ENCODE measurements at regions of chr1 and their contacts with region 1.

Region 1: DNA sequence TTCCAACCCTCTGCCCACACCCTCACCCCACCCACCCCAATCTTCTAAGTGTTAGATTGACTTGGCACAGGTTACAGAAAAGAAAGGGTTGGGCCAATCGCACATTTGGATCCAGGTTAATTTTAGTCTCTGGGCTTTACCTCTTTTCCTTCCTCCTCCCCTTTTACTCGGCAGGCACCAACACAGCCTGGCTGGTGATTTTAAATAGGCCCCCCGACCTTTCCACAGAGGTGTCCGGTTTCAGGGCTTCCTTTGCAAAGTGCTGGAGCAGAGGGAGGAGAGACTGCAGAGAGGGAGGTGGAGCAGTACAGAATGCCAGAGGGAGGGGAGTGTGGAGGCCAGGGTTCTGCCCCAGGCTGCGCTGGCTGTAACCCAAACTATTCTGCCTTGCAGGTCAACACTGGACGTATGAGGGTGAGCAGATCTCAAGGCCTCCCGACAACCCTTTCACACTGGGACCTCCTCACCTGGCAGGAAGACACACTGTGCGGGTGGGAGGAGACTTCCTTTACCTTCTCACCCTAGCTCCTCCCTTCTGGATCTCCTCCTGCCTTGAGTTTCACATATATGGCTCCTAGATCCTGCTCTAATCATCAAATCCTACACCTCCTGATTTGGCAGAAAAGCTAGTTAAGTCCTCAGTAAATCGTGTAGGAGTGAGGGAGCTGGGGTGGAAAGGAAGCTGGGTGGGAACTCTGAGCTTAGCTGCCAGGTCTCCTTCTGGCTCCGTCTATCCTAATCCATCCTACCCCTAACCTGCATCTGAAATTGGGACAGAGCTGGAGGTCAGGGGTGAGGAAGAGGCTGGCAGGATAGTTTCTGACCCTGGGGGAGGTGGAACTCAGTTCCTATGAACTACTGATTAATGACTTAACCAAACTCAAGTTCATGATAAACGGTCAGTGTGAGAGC is 2.4 kb downstream of the CA14 start:
- DNase-seq: peak; percentile 63
- H3K4me3 Mint-ChIP-seq: peak overlapping the region; percentile 49
- H3K27ac Mint-ChIP-seq: peak overlapping the region; percentile 77
- H3K4me1 Mint-ChIP-seq: peaks cover 78% of the 10 kb centered on the region
- H3K27me3 Mint-ChIP-seq: peaks cover 28% of the 10 kb centered on the region
- CTCF ChIP-seq: no peak

Region 2: GRCh38 chr1:150186789-150187559 is 73.0 kb before region 1 on chr1:
- CTCF ChIA-PET with region 1: no interaction called
- intact Hi-C with region 1: no loop called
- DNase-seq: peak; percentile 34
- H3K4me3 Mint-ChIP-seq: no peak overlapping the region
- H3K27ac Mint-ChIP-seq: peak overlapping the region; percentile 67
- H3K4me1 Mint-ChIP-seq: peaks cover 25% of the 10 kb centered on the region
- H3K27me3 Mint-ChIP-seq: no peaks in the 10 kb centered on the region
- CTCF ChIP-seq: peak; percentile 55

Region 3: DNA sequence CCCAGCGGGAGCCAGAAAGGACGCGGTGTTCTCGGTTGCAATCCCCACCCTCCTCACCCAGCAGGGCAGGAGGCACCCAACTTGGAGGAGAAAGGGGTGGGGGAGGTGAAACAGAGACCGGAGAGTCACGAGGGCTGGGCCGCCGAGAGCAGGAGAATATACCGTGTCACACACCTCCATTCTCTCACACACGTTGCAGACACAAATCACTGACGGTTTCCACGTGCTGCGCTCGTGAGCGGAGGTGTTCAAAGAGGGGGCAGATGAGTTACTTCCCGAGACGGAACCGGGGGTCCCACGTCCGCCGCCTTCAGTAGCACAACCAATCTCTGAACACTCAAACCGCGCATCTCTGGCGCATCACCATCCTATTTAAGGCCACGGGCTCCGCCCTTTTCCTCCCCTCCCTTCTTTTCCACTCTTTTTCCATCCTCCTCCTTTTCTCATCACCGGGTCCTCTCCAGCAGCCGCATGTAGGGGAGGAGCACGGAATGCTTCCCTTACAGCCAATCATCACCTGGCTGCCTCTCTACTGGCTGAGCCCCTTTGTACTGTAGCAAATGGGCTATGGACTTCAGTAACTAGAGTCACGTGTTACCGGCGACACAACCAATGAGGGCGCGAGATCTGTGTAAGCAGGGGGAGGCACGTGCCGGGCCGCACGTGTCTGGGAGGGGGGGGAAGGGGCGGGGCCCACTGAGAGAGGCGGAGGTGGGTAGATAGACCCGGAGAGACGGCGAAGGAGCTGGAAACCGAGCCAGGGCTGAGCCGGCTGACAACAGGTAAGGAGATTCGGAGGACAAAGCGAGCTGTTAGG is 22.0 kb after region 1 on chr1 and contains the start of gene CIART:
- CTCF ChIA-PET with region 1: interaction called, 50 read pairs
- intact Hi-C with region 1: loop called (anchors 1 kb)
- DNase-seq: peak; percentile 69
- H3K4me3 Mint-ChIP-seq: peak within 1 kb of the TSS; percentile 79
- H3K27ac Mint-ChIP-seq: peak within 1 kb of the TSS; percentile 87
- H3K4me1 Mint-ChIP-seq: peaks cover 26% of the 10 kb centered on the region
- H3K27me3 Mint-ChIP-seq: peaks cover 25% of the 10 kb centered on the region
- CTCF ChIP-seq: no peak
- total RNA-seq, gene CIART: 0.42 and 1.5 TPM in 2 replicates

Region 4: GRCh38 chr1:150321826-150322166 is 61.8 kb after region 1 on chr1:
- CTCF ChIA-PET with region 1: interaction called, 3 read pairs
- intact Hi-C with region 1: loop called (anchors 5 kb)
- DNase-seq: no peak
- H3K4me3 Mint-ChIP-seq: peak overlapping the region; percentile 90
- H3K27ac Mint-ChIP-seq: peak overlapping the region; percentile 91
- H3K4me1 Mint-ChIP-seq: no peaks in the 10 kb centered on the region
- H3K27me3 Mint-ChIP-seq: no peaks in the 10 kb centered on the region
- CTCF ChIP-seq: no peak

Region 5: DNA sequence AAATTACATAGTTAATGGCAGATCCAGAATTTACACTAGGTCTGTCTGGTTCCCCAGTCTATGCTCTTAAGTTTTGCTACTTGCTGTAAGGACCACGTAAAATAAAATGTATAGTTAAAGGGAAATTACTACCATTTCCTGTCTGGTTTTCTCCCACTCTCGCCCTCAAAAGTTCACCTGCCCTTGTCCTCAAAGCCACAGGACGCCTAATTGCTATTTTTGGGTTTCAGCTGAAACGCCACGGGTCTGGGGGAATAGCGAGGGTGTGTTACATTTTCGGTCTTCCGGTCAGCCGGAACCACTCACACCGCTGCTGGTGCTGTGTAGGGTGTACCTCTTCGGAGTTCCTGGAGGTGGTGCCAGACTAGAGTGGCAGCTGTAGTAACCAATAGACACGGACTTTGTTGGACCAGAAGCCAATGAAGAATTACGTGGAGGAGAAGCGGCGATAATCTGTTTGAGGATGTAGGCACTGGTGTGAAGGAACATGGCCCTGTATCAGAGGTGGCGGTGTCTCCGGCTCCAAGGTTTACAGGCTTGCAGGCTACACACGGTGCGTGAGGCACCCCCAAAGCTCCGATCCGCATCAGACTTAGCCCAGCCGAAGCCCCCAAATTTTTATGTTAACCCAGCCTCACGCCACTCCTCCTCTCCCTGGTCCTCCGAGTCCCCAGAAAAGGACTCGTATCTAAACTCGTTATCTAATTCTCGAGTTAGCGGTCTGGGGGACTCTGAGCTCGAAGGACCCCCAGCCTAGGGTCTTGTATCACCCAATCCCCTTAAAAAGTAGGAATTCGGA is 227.1 kb after region 1 on chr1 and contains the start of gene TARS2:
- CTCF ChIA-PET with region 1: no interaction called
- intact Hi-C with region 1: loop called (anchors 1 kb)
- DNase-seq: peak; percentile 98
- H3K4me3 Mint-ChIP-seq: peak within 1 kb of the TSS; percentile 88
- H3K27ac Mint-ChIP-seq: peak within 1 kb of the TSS; percentile 87
- H3K4me1 Mint-ChIP-seq: peaks cover 10% of the 10 kb centered on the region
- H3K27me3 Mint-ChIP-seq: no peaks in the 10 kb centered on the region
- CTCF ChIP-seq: peak; percentile 48
- total RNA-seq, gene TARS2: 42.2 and 51.7 TPM in 2 replicates

Region 6: GRCh38 chr1:150537732-150538684 is 278.0 kb after region 1 on chr1:
- CTCF ChIA-PET with region 1: no interaction called
- intact Hi-C with region 1: loop called (anchors 10 kb)
- DNase-seq: no peak
- H3K4me3 Mint-ChIP-seq: no peak overlapping the region
- H3K27ac Mint-ChIP-seq: no peak overlapping the region
- H3K4me1 Mint-ChIP-seq: peaks cover 27% of the 10 kb centered on the region
- H3K27me3 Mint-ChIP-seq: no peaks in the 10 kb centered on the region
- CTCF ChIP-seq: no peak